Prostate gland (tissue), 2 donors: ENCODE measurements at regions of chr9 and their contacts with region 1.

Region 1: GRCh38 chr9:18707061-18707461 is 233.1 kb downstream of the ADAMTSL1 start:
- DNase-seq: no peak
- H3K4me3 ChIP-seq: no peak overlapping the region
- H3K27ac ChIP-seq: no peak overlapping the region
- H3K4me1 ChIP-seq: no peaks in the 10 kb centered on the region
- H3K27me3 ChIP-seq: no peaks in the 10 kb centered on the region
- CTCF ChIP-seq: no peak
- POLR2A ChIP-seq: no peak

Region 2: GRCh38 chr9:18756712-18757125 is 49.7 kb after region 1 on chr9:
- intact Hi-C with region 1: loop called (anchors 10 kb)
- DNase-seq: no peak
- H3K4me3 ChIP-seq: no peak overlapping the region
- H3K27ac ChIP-seq: no peak overlapping the region
- H3K4me1 ChIP-seq: no peaks in the 10 kb centered on the region
- H3K27me3 ChIP-seq: no peaks in the 10 kb centered on the region
- CTCF ChIP-seq: no peak
- POLR2A ChIP-seq: no peak